IMR-90 (cell line): ENCODE measurements at regions of chr1 and their contacts with region 1.

Region 1: GRCh38 chr1:53196485-53197270 is at the start of gene CPT2:
- DNase-seq: peak; percentile 90
- ATAC-seq: peak; percentile 98
- H3K4me3 ChIP-seq: peak within 1 kb of the TSS; percentile 68
- H3K27ac ChIP-seq: peak within 1 kb of the TSS; percentile 83
- H3K4me1 ChIP-seq: peaks cover 13% of the 10 kb centered on the region
- H3K27me3 ChIP-seq: no peaks in the 10 kb centered on the region
- CTCF ChIP-seq: peak; percentile 18; the same call in 1 of the 2 replicates
- POLR2A ChIP-seq: peak; percentile 91
- RAD21 ChIP-seq: no peak
- total RNA-seq, gene CPT2: 14.2 and 16.0 TPM in 2 replicates

Region 2: DNA sequence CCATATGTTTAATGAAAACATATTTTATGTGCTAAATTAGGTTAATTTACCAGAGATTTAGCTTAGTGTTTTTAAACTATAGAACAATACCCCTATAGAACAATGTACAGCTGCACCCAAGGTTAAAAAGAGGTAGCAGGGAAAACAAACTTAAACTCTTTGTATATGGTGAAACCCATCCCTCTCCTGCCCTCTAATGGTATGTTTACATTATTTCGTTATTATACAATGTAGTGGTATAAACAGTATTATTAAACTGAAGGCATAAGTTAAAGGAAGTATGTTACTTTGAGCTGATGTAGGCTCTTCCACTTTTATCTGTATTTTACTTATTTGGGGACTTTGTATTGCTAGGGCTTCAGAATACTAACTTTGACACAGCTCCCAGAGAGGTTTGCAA is 370.8 kb before region 1 on chr1:
- CTCF ChIA-PET with region 1: no interaction called
- POLR2A ChIA-PET with region 1: no interaction called
- dilution Hi-C with region 1: no loop called
- in situ Hi-C with region 1: no loop called
- intact Hi-C with region 1: loop called (anchors 5 kb)
- DNase-seq: peak; percentile 34
- ATAC-seq: no peak; the same call in 1 of the 2 replicates
- H3K4me3 ChIP-seq: no peak overlapping the region
- H3K27ac ChIP-seq: no peak overlapping the region
- H3K4me1 ChIP-seq: peaks cover 2% of the 10 kb centered on the region
- H3K27me3 ChIP-seq: no peaks in the 10 kb centered on the region
- CTCF ChIP-seq: peak; percentile 40; the same call in 1 of the 2 replicates
- POLR2A ChIP-seq: no peak
- RAD21 ChIP-seq: peak; percentile 33

Region 3: DNA sequence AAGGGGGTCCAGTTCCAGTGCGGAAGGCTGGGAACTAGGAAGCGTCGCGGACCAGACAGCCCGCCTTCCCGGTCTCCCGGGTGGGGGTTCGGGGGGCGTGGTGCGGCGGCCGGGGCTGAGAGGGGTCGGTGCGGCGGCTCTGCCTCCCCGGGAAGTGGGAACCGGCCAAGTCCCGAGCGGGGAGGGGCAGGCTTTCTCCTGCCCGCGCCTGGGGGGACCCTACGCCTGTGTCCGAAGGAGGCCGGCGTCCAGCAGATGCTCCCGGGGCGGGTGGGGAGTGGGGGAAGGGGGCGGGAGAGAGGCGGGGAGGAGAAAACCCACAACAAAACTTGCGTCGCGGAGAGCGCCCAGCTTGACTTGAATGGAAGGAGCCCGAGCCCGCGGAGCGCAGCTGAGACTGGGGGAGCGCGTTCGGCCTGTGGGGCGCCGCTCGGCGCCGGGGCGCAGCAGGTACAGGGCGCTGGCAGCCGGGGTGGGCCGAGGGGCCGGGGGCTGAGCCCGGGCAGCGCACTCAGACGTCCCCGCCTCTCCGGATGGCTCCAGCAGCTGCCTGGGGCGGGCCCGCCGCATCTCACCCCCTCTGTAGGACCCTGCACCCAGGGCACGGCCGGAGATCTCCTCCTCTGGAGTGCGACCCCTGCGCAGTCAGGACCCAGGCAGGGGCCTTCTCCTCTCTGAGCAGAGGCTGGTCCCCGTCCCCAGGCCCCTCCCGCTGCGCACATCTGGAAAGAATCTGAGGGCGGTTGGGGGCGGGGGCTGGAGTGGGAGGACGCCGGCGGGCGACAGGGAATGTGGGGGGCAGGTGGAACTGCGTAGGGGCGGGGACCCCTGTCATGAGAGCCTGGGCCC is 134.6 kb before region 1 on chr1 and contains the start of gene PODN:
- CTCF ChIA-PET with region 1: no interaction called
- POLR2A ChIA-PET with region 1: no interaction called
- dilution Hi-C with region 1: no loop called
- in situ Hi-C with region 1: no loop called
- intact Hi-C with region 1: loop called (anchors 5 kb)
- DNase-seq: no peak
- ATAC-seq: peak; percentile 57
- H3K4me3 ChIP-seq: peak within 1 kb of the TSS; percentile 92
- H3K27ac ChIP-seq: peak within 1 kb of the TSS; percentile 9; the same call in 1 of the 2 replicates
- H3K4me1 ChIP-seq: peaks cover 13% of the 10 kb centered on the region
- H3K27me3 ChIP-seq: peaks cover 2% of the 10 kb centered on the region; the same call in 1 of the 2 replicates
- CTCF ChIP-seq: no peak
- POLR2A ChIP-seq: no peak
- RAD21 ChIP-seq: no peak
- total RNA-seq, gene PODN: 0.54 and 0.56 TPM in 2 replicates